ENCODE measurements at regions of chr12 and their contacts with region 1.

Region 1: DNA sequence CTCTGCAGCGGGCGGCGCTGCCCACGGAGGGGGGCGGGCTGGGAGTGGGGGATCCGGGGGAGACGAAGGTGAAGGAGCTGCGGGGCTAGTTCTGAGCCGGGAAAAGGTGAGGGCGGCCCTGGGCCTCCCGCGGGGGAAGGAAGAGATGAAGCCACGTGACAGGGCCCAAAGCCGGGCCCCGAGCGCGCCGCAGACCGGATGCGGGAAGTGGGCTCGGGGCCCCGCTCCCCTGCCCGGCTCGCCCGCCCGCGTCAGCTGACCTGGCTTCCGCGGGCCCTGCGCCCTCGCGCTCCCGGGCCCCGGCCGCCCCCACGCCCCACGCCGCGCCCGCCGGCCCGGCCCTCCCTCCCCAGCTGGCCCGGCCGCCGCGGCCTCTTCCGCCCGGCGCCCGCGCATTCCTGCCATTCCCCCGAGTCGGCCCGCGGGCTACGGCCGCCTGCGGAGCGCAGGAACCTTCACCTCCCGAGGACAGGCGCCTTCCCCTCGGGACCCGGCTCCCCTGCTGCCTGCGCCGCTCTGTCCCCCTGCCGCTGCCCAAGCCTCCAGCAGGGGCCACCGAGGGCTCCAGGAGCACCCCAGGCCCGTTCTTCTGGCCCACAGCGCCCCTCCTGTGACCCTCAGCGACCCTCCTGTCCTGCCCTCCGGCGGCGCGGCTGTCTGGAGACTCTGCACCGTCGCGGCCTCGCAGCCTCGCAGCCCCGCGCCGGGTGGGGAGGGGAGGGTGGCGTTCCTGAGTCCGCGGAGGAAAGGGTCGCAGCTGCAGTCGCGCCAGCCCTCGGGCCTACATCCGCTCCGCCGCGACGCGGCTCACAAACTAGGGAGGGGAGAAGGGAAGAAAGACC is 20.4 kb downstream of the NINJ2 start:
- DNase-seq: peak; percentile 82 to 83
- ATAC-seq: peak; percentile 73 to 88
- H3K4me3 ChIP-seq: peak overlapping the region; percentile 50
- H3K27ac ChIP-seq: peak overlapping the region; percentile 98
- H3K4me1 ChIP-seq: peaks cover 49% of the 10 kb centered on the region
- CTCF ChIP-seq: peak; percentile 24; the same call in 2 of the 3 replicates
- EP300 ChIP-seq: no peak; a peak in 1 of 5 replicates
- POLR2A ChIP-seq: peak; percentile 24; the same call in 1 of the 2 replicates
- RAD21 ChIP-seq: peak in 1 of 2 experiments; percentile 13; a peak in 2 of 5 replicates

Region 2: DNA sequence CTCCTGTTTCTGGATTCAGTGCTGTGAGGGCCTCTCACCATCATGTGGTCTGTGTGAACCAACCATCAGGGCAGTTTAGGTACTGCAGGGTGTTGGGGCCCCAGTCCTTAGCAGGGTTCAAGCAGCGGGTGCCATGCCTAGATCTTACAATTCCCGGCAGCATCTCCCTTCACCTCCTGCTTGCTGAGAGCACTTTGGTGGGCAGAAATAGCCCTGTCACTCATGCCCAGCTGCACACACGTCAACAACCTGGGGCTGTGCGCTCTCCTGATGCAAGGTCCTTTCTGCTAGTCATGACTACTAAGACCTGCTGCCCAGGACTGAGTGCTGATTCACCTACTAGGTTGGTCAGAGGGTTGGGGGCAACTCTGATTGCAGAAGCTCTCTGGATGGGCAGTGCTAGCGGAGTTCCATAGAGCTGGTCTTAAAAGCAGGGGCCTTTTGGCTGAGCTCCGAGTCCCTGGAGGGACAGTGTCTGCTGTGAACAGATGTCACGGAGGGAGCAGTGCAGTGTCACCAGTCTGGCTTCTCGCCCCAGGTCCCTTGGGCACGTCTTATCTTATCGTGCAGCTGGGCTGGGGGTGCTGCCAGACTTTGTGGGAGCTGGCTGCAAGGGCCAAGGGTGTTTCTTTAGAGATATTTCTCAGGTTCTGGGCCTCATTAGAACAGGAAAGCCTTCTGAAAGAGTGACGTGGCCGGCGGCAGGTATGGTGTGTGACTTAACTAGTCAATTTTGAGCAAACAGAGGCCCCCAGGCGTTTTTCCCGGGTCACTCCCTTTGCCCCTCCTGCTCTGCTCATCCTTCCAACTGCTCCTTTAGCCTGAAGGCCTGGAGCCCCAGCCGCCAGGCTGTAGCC is 51.5 kb before region 1 on chr12:
- CTCF ChIA-PET with region 1: no interaction called
- POLR2A ChIA-PET with region 1: no interaction called
- DNase-seq: no peak
- ATAC-seq: peak; percentile 68 to 83; a peak in 5 of 6 replicates
- H3K4me3 ChIP-seq: no peak overlapping the region
- H3K27ac ChIP-seq: no peak overlapping the region
- H3K4me1 ChIP-seq: no peaks in the 10 kb centered on the region
- CTCF ChIP-seq: no peak
- EP300 ChIP-seq: no peak
- POLR2A ChIP-seq: no peak
- RAD21 ChIP-seq: no peak

Region 3: GRCh38 chr12:630656-631632 is 11.9 kb before region 1 on chr12:
- CTCF ChIA-PET with region 1: interaction called, 9 read pairs
- POLR2A ChIA-PET with region 1: interaction called, 17 read pairs
- DNase-seq: no peak
- ATAC-seq: no peak
- H3K4me3 ChIP-seq: no peak overlapping the region
- H3K27ac ChIP-seq: peak overlapping the region; percentile 96 to 97
- H3K4me1 ChIP-seq: peaks cover 58% of the 10 kb centered on the region
- CTCF ChIP-seq: no peak
- EP300 ChIP-seq: no peak
- POLR2A ChIP-seq: no peak
- RAD21 ChIP-seq: no peak